Aorta (tissue), 5 donors: ENCODE measurements at regions of chr2 and their contacts with region 1.

Region 1: DNA sequence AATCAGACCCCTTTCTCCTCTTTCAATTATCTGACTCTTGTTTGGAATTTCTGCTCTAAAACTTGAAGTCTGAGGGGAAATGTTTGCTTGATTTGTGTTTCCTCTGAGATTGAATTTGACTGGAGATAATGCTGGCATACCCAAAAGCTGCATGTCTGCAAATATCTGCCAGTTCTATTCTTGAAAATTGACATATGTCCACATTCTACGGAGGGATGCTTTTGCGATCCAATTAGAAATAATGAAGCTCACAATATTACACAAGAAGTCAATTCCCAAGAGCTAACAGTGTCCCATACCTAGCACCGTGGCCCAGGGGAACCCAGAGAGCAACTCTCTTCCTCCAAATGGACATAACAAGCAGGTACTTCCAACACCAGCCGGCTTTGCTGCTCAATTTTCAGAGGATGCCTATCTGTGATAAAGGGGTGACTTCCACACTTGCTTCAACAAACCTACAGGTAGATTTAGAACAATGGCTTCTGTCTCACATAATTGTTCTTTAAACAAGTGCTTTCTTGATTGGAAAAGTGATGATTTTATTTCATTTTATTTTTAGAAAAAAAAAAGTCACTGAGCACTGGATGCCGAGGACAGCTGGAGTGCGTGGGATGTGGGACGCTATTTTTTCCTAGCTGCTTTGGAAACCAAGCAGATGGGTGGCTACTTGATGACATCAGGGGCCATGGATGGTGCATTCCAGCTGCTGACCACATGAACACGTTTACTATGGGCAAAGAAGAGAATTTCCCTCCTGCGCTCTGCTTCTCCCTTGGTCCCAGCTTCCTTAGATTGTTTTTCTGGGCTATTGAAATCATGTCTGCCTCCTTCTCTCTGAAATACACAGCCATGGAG is 488.9 kb downstream of the RNF144A start:
- DNase-seq: no peak
- ATAC-seq: no peak
- H3K4me3 ChIP-seq: no peak overlapping the region
- H3K27ac ChIP-seq: no peak overlapping the region
- H3K4me1 ChIP-seq: no peaks in the 10 kb centered on the region
- H3K27me3 ChIP-seq: no peaks in the 10 kb centered on the region

Region 2: DNA sequence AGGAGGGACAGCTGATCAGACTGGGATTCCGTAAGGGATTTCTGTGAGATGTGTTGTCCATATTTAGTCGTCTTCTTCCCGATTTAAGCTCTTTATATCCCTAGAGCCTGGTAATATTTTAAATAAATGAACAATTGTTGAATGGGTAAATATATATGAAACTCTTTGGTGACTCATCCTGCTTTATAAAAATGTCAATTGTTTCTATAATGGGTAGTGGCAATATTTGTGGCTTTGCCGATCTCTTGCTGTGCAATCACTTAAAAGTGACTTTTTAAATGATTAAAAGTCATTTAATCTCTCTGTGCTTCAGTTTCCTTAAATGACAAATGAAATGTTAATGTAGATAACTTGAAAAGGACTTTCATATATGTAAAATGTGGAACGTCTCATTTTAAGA is 149.7 kb before region 1 on chr2:
- intact Hi-C with region 1: loop called in 1 of 2 experiments (anchors 10 kb)
- DNase-seq: no peak
- ATAC-seq: no peak
- H3K4me3 ChIP-seq: no peak overlapping the region
- H3K27ac ChIP-seq: no peak overlapping the region
- H3K4me1 ChIP-seq: no peaks in the 10 kb centered on the region
- H3K27me3 ChIP-seq: no peaks in the 10 kb centered on the region

Region 3: DNA sequence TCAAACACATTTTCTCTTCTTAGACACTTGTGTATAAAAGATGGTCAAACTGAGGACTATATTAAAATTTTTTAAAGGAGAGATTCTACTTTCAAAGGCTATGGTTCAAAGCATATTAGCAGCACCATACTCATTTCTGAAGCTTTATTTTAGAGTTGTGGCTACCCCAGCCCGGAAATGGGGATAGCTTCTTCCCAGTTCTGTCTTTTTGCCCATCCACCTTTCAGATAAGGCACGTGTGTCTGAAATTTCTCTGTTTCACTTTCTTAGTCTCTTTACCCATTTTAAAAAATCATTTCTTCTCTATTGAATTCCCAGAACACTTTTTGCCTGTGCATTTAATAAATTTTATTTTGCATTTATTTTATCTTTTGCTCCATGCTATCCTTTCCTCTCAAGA is 57.3 kb before region 1 on chr2:
- intact Hi-C with region 1: no loop called
- DNase-seq: no peak
- ATAC-seq: no peak
- H3K4me3 ChIP-seq: no peak overlapping the region
- H3K27ac ChIP-seq: no peak overlapping the region
- H3K4me1 ChIP-seq: no peaks in the 10 kb centered on the region
- H3K27me3 ChIP-seq: no peaks in the 10 kb centered on the region